Sciatic nerve (tissue), 2 donors: ENCODE measurements at regions of chr20 and their contacts with region 1.

Region 1: DNA sequence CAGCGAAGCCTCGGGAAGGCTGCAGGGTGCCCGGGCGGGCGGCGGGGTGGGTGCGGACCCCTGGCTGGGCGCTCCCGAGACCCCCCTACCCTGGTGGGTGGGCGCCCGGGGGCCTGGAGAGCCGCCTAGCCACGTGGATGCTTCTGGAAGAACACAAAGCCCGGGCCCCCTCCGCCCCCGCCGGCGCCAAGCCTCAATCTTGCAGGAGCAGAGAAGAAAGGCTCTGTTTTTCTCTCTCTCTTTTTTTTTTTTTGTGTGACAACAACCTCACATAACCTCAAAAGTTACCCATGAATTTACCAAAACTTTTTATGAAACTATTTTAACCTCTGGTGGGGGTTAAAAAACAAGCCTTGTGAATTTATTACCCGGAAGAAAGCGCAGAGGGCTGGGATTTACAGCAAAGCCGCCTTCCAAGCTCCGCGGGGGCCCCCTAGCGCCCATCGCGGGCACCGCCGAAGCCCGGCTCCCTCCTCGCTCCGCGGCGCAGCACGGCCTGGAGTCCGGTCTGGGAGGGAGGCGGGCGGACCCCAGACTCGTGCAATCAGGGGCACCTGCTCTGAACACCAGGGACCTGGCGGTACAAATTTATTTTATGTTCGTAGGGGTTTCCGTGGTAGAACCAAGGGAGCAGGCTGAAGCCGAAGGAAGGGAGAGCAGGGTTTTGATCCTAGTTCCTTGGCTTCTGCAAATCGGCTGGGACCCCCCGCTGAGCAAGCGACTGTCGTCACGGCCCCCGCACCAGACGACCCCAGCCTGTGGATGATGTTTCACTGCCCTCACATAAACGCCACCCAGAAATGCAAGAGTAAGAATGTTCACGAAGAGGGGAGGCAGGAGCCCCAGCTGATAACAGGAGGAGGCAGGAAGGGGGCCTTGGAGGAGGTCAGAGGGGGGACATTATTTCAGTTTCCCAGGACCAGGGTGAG is 58.9 kb downstream of the ZNF831 start:
- DNase-seq: peak; percentile 88
- ATAC-seq: peak; percentile 95

Region 2: GRCh38 chr20:58868795-58869194 is 353.7 kb before region 1 on chr20:
- intact Hi-C with region 1: loop called (anchors 5 kb)
- DNase-seq: no peak
- ATAC-seq: no peak

Region 3: DNA sequence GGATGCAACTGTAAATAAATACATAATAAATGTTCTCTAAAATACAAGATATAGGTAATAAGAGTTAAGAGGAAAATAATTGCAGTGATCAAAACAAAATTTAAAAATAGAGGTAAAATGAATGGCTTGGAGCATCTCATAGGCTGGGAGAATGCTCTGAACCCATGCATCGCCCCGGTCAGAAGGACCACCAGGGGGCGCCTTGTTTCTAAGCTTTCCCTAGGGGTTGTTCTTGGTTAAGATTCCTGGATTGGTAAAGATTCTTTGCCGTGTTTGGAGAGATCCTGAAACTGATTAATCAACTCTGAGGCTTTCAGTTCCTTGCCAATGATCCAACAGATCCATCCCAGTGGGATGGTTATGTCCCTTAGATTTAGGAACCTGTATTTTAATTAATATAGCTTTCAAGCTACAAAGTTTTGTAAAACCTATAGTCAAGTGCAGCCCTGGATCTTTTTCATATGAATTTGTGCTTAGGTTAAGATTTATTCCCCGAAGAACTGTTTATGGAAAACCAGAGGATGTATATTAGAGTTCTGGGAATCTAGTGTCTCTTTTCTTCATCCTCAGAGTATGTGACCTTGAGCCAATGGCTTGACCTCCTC is 134.6 kb before region 1 on chr20:
- intact Hi-C with region 1: loop called (anchors 5 kb)
- DNase-seq: peak; percentile 87
- ATAC-seq: peak; percentile 81